ENCODE measurements at regions of chr1 and their contacts with region 1.

Region 1: DNA sequence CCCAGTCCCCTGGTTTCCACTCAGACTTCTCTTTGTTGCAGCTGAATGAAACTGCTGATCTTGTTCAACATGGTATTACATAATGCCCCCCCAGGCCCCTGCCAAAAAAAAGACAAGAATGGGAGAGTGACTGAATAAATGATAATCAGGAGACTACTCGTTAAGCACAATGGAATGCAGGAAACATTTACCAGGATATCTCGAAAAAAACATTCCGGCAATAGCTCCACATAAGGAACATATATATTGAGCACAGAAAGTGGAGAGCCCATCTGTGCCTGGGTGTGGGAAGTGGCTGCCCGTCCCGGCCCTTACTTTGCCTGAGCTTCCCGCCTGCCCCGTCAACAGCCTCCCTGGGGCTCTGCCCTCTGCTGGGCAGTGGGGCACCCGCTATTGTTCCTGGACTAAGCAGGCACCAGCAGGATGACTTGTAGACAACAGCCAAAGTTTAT is 13.4 kb downstream of the TRIM11 start:
- DNase-seq: peak; percentile 32
- H3K4me3 ChIP-seq: no peak overlapping the region
- H3K27ac ChIP-seq: peak overlapping the region; percentile 74
- H3K27me3 ChIP-seq: no peaks in the 10 kb centered on the region
- CTCF ChIP-seq: peak; percentile 61

Region 2: GRCh38 chr1:228378873-228379460 is 14.3 kb before region 1 on chr1:
- CTCF ChIA-PET with region 1: interaction called, 27 read pairs
- POLR2A ChIA-PET with region 1: interaction called, 3 read pairs
- DNase-seq: no peak
- H3K4me3 ChIP-seq: peak overlapping the region; percentile 66
- H3K27ac ChIP-seq: no peak overlapping the region
- H3K27me3 ChIP-seq: no peaks in the 10 kb centered on the region
- CTCF ChIP-seq: no peak

Region 3: GRCh38 chr1:228457396-228458176 is 64.3 kb after region 1 on chr1:
- CTCF ChIA-PET with region 1: interaction called, 10 read pairs
- POLR2A ChIA-PET with region 1: interaction called, 6 read pairs
- DNase-seq: peak; percentile 97
- H3K4me3 ChIP-seq: peak overlapping the region; percentile 83
- H3K27ac ChIP-seq: peak overlapping the region; percentile 74
- H3K27me3 ChIP-seq: no peaks in the 10 kb centered on the region
- CTCF ChIP-seq: peak; percentile 31; the same call in 1 of the 2 replicates

Measured in AG04450 (cell line).